Heart left ventricle (tissue), 16 donors: ENCODE measurements at regions of chr5 and their contacts with region 1.

Region 1: GRCh38 chr5:179907570-179908324 is at the start of gene TBC1D9B:
- DNase-seq: peak; percentile 71 to 87 (median 75)
- ATAC-seq: peak; percentile 67 to 93 (median 90)
- H3K4me3 ChIP-seq: peak within 1 kb of the TSS; percentile 24 to 82 (median 66)
- H3K27ac ChIP-seq: peak within 1 kb of the TSS; percentile 40 to 86 (median 73)
- H3K4me1 ChIP-seq: peaks cover 0 to 30% (median 15%) of the 10 kb centered on the region in 12 donors
- H3K27me3 ChIP-seq: no peaks in the 10 kb centered on the region
- CTCF ChIP-seq: peak; percentile 19 to 64 (median 44)
- POLR2A ChIP-seq: peak in 1 of 2 donors; percentile 26
- total RNA-seq, gene TBC1D9B: 29.3 to 68.9 (median 43.1) TPM

Region 2: GRCh38 chr5:179763215-179763945 is 144.4 kb before region 1 on chr5:
- intact Hi-C with region 1: loop called in 4 of 10 experiments (anchors 2 to 10 kb)
- DNase-seq: peak in 3 of 5 donors; percentile 67 to 73 (median 69)
- ATAC-seq: peak in 3 of 4 donors; percentile 47 to 79 (median 66)
- H3K4me3 ChIP-seq: no peak overlapping the region
- H3K27ac ChIP-seq: peak overlapping the region in 3 of 12 donors; percentile 35 to 51 (median 35)
- H3K4me1 ChIP-seq: peaks cover 0 to 96% (median 68%) of the 10 kb centered on the region in 12 donors
- H3K27me3 ChIP-seq: no peaks in the 10 kb centered on the region
- CTCF ChIP-seq: peak; percentile 79 to 96 (median 89)
- POLR2A ChIP-seq: no peak

Region 3: GRCh38 chr5:179870402-179870903 is 37.3 kb before region 1 on chr5:
- intact Hi-C with region 1: loop called in 3 of 10 experiments (anchors 1 to 5 kb)
- DNase-seq: peak in 4 of 5 donors; percentile 34 to 89 (median 76)
- ATAC-seq: peak; percentile 27 to 80 (median 67)
- H3K4me3 ChIP-seq: no peak overlapping the region
- H3K27ac ChIP-seq: peak overlapping the region in 6 of 12 donors; percentile 18 to 74 (median 39)
- H3K4me1 ChIP-seq: peaks cover 0 to 15% (median 1%) of the 10 kb centered on the region in 12 donors
- H3K27me3 ChIP-seq: no peaks in the 10 kb centered on the region
- CTCF ChIP-seq: peak in 9 of 12 donors; percentile 13 to 69 (median 46)
- POLR2A ChIP-seq: no peak

Region 4: DNA sequence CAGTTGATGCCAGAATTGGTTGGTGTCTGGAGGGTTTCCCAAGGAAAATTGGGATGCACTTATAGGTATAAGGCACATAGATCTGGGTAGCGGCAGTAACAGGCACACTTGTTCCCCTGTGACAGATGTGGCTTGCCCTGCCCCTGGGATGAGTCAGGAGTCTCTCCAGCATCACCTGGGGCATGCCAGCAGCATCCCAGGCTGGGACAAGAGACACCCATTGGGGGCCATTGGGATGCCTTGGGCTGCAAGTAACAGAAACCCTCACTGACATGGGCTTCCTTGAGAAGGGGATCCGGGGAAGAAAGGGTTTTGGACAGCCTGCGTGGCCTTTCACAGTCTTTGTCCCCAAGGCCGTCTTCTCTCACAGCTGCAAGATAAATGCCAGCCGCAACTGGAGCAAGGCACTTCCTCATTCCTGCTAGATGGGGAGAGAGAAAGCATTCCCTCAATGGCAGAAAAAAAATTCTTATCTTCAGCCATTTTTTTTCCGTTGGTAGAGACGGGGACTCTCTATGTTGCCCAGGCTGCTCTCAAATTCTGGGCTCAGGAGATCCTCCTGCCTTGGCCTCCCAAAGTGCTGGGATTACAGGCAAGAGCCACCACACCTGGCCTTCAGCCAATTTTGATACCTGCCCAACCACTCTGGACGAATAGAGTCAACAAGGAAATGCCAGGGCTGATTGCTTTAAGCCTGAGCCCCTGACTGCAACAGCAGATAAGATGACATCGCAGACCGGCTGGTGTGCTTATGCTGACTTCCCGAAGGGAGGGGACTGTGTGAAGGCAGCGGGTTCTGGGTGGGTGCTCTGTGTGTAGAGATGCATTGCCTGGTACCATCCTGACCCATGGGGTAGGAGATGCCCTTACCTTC is 177.2 kb after region 1 on chr5:
- intact Hi-C with region 1: loop called in 4 of 10 experiments (anchors 5 to 10 kb)
- DNase-seq: no peak
- ATAC-seq: peak in 1 of 4 donors; percentile 35
- H3K4me3 ChIP-seq: no peak overlapping the region
- H3K27ac ChIP-seq: no peak overlapping the region
- H3K4me1 ChIP-seq: peaks cover 0 to 10% (median 0%) of the 10 kb centered on the region in 12 donors
- H3K27me3 ChIP-seq: peaks cover 0 to 18% (median 0%) of the 10 kb centered on the region in 9 donors
- CTCF ChIP-seq: no peak
- POLR2A ChIP-seq: no peak